IMR-90 (cell line): ENCODE measurements at regions of chr19 and their contacts with region 1.

Region 1: GRCh38 chr19:18291590-18292461 is 10.4 kb upstream of the JUND start:
- DNase-seq: peak; percentile 75
- ATAC-seq: peak; percentile 76
- H3K4me3 ChIP-seq: peak overlapping the region; percentile 49
- H3K27ac ChIP-seq: peak overlapping the region; percentile 92
- H3K4me1 ChIP-seq: peaks cover 23% of the 10 kb centered on the region
- H3K27me3 ChIP-seq: no peaks in the 10 kb centered on the region
- CTCF ChIP-seq: no peak
- POLR2A ChIP-seq: peak; percentile 64
- RAD21 ChIP-seq: no peak

Region 2: GRCh38 chr19:16737911-16738310 is 1553.9 kb before region 1 on chr19:
- CTCF ChIA-PET with region 1: no interaction called
- POLR2A ChIA-PET with region 1: interaction called, 10 read pairs
- dilution Hi-C with region 1: no loop called
- in situ Hi-C with region 1: no loop called
- intact Hi-C with region 1: no loop called
- DNase-seq: peak; percentile 15
- ATAC-seq: peak; percentile 9; the same call in 1 of the 2 replicates
- H3K4me3 ChIP-seq: no peak overlapping the region
- H3K27ac ChIP-seq: no peak overlapping the region
- H3K4me1 ChIP-seq: peaks cover 5% of the 10 kb centered on the region
- H3K27me3 ChIP-seq: no peaks in the 10 kb centered on the region
- CTCF ChIP-seq: no peak
- POLR2A ChIP-seq: no peak
- RAD21 ChIP-seq: no peak

Region 3: DNA sequence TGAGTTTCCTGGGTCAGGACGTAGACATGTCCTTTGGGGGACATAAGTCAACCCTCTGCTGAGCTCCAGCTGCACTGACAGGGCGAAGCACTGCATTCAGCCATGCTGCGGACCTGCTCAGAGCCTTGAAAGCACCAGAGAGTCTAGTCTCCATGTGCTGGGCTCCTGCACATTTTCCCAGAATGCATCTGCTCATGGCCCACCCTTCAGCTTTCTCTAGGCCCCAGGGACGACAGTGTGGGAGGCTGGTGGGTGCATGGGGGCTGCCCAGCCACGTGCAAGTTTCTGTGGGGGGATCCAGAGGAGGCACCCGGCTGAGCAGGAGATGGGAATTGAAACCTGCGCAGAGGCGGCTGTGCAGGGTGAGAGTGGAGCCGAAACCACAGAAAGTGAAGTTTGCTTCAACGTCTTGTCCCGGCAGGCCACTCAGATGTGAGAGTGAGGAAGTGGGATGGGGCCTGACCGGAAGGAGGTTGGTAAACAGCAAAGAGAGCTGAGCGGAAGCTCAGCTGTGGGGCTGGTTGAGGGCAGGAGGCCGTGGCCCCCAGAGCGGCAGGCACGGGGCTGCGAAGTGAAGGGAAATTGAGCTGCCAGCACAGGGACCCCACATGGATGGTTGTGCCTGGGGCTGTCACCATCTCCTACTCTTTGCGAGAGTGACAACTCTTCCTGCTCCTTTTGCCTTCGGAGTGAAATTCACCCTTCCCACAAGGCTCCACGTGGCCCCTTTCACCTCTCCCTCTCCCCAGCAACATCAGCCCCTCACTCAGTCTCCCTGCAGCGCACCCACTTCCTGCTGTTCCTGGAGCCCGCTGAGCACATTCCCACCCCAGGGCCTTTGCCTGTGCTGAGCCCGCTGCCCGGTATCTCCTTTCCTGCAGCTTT is 768.6 kb before region 1 on chr19:
- CTCF ChIA-PET with region 1: no interaction called
- POLR2A ChIA-PET with region 1: interaction called, 17 read pairs
- dilution Hi-C with region 1: no loop called
- in situ Hi-C with region 1: no loop called
- intact Hi-C with region 1: no loop called
- DNase-seq: no peak
- ATAC-seq: no peak; the same call in 1 of the 2 replicates
- H3K4me3 ChIP-seq: no peak overlapping the region
- H3K27ac ChIP-seq: no peak overlapping the region
- H3K4me1 ChIP-seq: no peaks in the 10 kb centered on the region
- H3K27me3 ChIP-seq: no peaks in the 10 kb centered on the region
- CTCF ChIP-seq: no peak
- POLR2A ChIP-seq: no peak
- RAD21 ChIP-seq: no peak

Region 4: DNA sequence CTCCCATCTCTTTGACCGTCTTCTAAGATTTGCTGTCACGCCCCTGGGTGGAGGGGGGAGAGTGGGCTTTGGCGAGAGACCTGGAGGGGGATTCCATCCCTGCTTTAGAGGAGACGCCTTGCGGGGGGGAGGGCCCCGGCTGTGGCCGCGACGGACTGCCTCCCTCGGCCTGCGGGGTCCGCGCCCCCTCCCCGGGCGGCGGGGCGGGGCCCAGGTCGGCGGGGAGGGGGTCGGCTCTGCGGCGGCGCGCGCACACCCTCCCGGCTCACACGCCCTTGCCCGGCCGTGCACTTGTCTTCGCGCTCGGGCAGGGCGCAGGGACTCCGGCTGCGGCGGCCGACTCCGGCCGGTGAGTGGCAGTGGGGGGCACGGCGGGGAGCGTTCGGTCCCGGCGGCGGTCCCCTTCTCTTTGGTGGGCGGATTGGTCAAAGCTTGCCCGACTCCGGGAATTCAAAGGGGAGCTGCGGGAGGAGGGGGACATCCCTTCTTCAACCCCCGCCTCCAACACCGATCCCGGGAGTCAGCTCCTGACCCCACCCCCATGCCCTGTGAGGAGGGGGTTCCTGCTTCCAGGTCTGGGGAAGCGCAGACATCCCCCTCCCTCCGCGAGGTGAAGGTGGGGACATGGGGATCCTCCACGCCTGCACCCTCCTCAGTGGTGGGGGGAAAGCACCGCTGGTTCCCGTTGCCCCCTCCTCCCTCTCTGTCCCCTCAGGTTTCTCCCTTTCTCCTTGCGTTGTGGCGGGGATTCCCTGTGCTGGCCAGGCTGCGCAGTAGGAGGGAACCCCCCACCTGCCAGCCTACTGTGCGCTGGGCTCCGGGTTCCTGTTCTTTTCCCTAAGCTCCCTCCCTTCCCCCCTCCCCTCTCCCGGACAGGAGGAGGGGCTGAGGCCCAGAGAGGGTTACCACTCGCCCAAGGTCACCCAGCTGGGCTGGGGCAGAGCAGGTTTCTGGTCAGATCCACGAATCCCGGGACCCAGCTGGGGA is 339.5 kb before region 1 on chr19:
- CTCF ChIA-PET with region 1: no interaction called
- POLR2A ChIA-PET with region 1: no interaction called
- dilution Hi-C with region 1: no loop called
- in situ Hi-C with region 1: no loop called
- intact Hi-C with region 1: no loop called
- DNase-seq: no peak
- ATAC-seq: no peak
- H3K4me3 ChIP-seq: no peak overlapping the region
- H3K27ac ChIP-seq: no peak overlapping the region
- H3K4me1 ChIP-seq: peaks cover 2% of the 10 kb centered on the region
- H3K27me3 ChIP-seq: peaks cover 71% of the 10 kb centered on the region
- CTCF ChIP-seq: no peak
- POLR2A ChIP-seq: no peak
- RAD21 ChIP-seq: no peak

Region 5: GRCh38 chr19:18304458-18305310 is 12.9 kb after region 1 on chr19:
- CTCF ChIA-PET with region 1: no interaction called
- POLR2A ChIA-PET with region 1: interaction called, 11 read pairs
- dilution Hi-C with region 1: no loop called
- in situ Hi-C with region 1: no loop called
- intact Hi-C with region 1: no loop called
- DNase-seq: peak; percentile 83
- ATAC-seq: peak; percentile 86
- H3K4me3 ChIP-seq: peak overlapping the region; percentile 40
- H3K27ac ChIP-seq: peak overlapping the region; percentile 97
- H3K4me1 ChIP-seq: peaks cover 22% of the 10 kb centered on the region
- H3K27me3 ChIP-seq: no peaks in the 10 kb centered on the region
- CTCF ChIP-seq: no peak
- POLR2A ChIP-seq: peak; percentile 88
- RAD21 ChIP-seq: no peak; the same call in none of the 2 replicates

Region 6: GRCh38 chr19:18388100-18388959 is 96.5 kb after region 1 on chr19:
- CTCF ChIA-PET with region 1: no interaction called
- POLR2A ChIA-PET with region 1: no interaction called
- dilution Hi-C with region 1: no loop called
- in situ Hi-C with region 1: no loop called
- intact Hi-C with region 1: no loop called
- DNase-seq: no peak
- ATAC-seq: peak; percentile 72
- H3K4me3 ChIP-seq: peak overlapping the region; percentile 13
- H3K27ac ChIP-seq: no peak overlapping the region
- H3K4me1 ChIP-seq: peaks cover 7% of the 10 kb centered on the region; the same call in 1 of the 2 replicates
- H3K27me3 ChIP-seq: no peaks in the 10 kb centered on the region
- CTCF ChIP-seq: peak; percentile 87
- POLR2A ChIP-seq: no peak
- RAD21 ChIP-seq: peak; percentile 66